Caco-2 (cell line): ENCODE measurements at regions of chr11 and their contacts with region 1.

Region 1: DNA sequence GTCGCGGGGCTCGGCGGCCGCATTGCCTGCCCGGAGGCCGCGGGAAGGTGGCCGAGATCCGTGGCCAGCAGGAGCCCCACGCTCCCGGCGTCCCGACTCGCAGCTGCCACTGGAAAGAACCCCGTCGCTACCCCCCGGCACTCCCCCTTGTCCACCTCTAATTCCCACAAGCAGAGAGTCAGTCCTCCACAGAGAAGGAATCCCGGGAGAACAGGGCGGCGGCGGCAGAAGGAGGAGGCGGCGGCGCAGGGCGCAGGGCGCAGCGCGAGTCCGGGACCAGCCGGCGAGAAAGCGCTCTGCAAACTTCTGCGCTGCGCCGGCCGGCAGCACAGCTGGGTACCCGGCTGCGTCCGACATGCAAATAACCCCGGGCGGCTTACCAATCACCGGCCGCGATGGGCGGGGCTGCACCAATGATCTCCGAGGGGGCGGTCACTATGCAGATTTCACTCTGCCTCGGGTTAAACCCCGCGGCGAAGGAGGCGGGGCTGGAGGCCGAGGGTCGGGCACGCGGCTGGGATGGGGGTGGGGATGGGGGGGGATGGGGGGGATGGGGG is at the start of gene ABTB2:
- DNase-seq: peak; percentile 98 to 99
- H3K4me3 ChIP-seq: peak within 1 kb of the TSS; percentile 53
- H3K4me3 Mint-ChIP-seq: peak within 1 kb of the TSS; percentile 75
- H3K27ac Mint-ChIP-seq: peak within 1 kb of the TSS; percentile 53
- H3K4me1 ChIP-seq: peaks cover 7% of the 10 kb centered on the region; the same call in 1 of the 2 replicates
- H3K4me1 Mint-ChIP-seq: peaks cover 6% of the 10 kb centered on the region
- H3K27me3 ChIP-seq: peaks cover 4% of the 10 kb centered on the region
- H3K27me3 Mint-ChIP-seq: peaks cover 13% of the 10 kb centered on the region
- CTCF ChIP-seq: no peak
- total RNA-seq, gene ABTB2: 2.9 and 3.6 TPM in 2 replicates

Region 2: GRCh38 chr11:33857933-33858371 is 499.8 kb before region 1 on chr11:
- CTCF ChIA-PET with region 1: no interaction called
- POLR2A ChIA-PET with region 1: no interaction called
- intact Hi-C with region 1: loop called (anchors 5 kb)
- DNase-seq: peak; percentile 60 to 77
- H3K4me3 ChIP-seq: no peak overlapping the region
- H3K4me3 Mint-ChIP-seq: no peak overlapping the region
- H3K27ac Mint-ChIP-seq: no peak overlapping the region
- H3K4me1 ChIP-seq: no peaks in the 10 kb centered on the region
- H3K4me1 Mint-ChIP-seq: no peaks in the 10 kb centered on the region
- H3K27me3 ChIP-seq: peaks cover 4% of the 10 kb centered on the region; the same call in 1 of the 2 replicates
- H3K27me3 Mint-ChIP-seq: peaks cover 39% of the 10 kb centered on the region
- CTCF ChIP-seq: peak; percentile 88 to 91

Region 3: DNA sequence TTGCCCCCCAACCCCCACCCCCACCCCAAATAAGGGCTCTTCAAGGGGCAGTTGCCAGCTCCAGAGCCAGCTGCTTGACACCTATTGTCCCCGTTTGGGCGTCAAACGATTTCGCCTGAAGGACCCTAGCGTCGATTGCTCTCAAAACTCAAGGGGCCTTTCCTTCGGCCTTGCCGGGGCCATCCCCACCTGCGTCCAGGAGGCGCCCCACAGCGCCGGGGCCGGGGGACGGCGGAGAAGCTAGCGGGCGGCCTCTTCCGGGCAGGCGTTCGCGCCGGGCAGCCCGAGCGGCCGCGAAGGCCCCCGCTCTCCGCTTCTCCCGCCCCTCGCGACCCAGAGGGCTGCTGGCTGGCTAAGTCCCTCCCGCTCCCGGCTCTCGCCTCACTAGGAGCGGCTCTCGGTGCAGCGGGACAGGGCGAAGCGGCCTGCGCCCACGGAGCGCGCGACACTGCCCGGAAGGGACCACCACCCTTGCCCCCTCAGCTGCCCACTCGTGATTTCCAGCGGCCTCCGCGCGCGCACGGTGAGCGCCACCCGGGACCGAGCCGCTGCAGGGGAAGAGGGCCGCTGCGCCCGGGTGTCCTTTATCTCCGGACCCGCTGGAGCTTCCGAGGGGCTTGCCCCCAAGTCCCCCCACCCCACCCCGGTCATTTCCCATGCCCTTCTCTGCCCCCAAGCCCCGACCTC is 306.3 kb before region 1 on chr11 and contains the start of gene CAPRIN1:
- CTCF ChIA-PET with region 1: no interaction called
- POLR2A ChIA-PET with region 1: interaction called, 4 read pairs
- intact Hi-C with region 1: loop called (anchors 5 kb)
- DNase-seq: peak; percentile 97 to 98
- H3K4me3 ChIP-seq: peak within 1 kb of the TSS; percentile 94
- H3K4me3 Mint-ChIP-seq: peak within 1 kb of the TSS; percentile 98
- H3K27ac Mint-ChIP-seq: peak within 1 kb of the TSS; percentile 97
- H3K4me1 ChIP-seq: peaks cover 19% of the 10 kb centered on the region
- H3K4me1 Mint-ChIP-seq: peaks cover 14% of the 10 kb centered on the region
- H3K27me3 ChIP-seq: no peaks in the 10 kb centered on the region
- H3K27me3 Mint-ChIP-seq: no peaks in the 10 kb centered on the region
- CTCF ChIP-seq: peak in 1 of 2 experiments; percentile 13
- total RNA-seq, gene CAPRIN1: 217 and 224 TPM in 2 replicates

Region 4: GRCh38 chr11:34174412-34175041 is 183.3 kb before region 1 on chr11:
- CTCF ChIA-PET with region 1: interaction called, 60 read pairs
- POLR2A ChIA-PET with region 1: no interaction called
- intact Hi-C with region 1: loop called (anchors 1 kb)
- DNase-seq: peak; percentile 71 to 88
- H3K4me3 ChIP-seq: peak overlapping the region; percentile 15; the same call in 1 of the 2 replicates
- H3K4me3 Mint-ChIP-seq: peak overlapping the region; percentile 75
- H3K27ac Mint-ChIP-seq: no peak overlapping the region
- H3K4me1 ChIP-seq: 0 out of 2 replicates have a peak, but pooled peaks cover 3% of the 10 kb centered on the region
- H3K4me1 Mint-ChIP-seq: no peaks in the 10 kb centered on the region
- H3K27me3 ChIP-seq: no peaks in the 10 kb centered on the region
- H3K27me3 Mint-ChIP-seq: no peaks in the 10 kb centered on the region
- CTCF ChIP-seq: peak; percentile 91 to 98

Region 5: DNA sequence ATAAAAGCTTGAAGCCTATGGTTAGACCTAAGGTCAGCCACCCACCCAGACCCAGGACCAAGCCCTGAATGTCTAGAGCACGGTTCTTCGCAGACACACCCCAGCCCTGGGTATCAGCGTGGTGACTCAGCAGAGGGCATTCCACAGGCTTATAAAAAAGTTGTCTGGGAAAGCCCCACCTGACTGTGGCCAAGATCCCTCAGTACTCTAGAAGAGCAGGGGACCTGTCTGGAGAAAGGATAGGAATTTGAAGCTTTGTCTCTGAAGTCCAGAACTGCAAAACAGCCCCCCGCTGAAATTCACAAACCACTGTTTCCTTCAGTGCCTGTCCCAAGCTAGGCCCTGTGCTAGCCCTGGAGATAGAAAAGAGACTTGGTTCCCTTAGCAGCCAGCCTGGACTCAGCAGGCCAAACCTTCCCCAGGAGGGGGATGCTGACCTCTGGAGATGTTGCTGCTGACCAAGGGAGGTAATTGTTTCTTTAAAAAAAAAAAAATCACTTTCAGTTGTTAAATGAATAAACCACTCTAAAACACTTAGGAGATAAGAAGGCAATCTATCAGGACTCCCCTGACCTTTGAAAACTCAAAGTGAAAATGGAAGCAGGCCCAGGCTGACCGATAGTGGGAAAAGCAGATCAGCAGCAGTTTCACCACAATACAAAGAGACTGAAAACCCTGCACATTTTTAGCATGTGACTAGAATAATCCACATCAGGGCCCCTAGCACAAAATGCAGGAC is 113.9 kb before region 1 on chr11:
- CTCF ChIA-PET with region 1: no interaction called
- POLR2A ChIA-PET with region 1: no interaction called
- intact Hi-C with region 1: loop called (anchors 5 kb)
- DNase-seq: peak; percentile 72 to 89
- H3K4me3 ChIP-seq: no peak overlapping the region
- H3K4me3 Mint-ChIP-seq: no peak overlapping the region
- H3K27ac Mint-ChIP-seq: peak overlapping the region; percentile 88
- H3K4me1 ChIP-seq: peaks cover 54% of the 10 kb centered on the region
- H3K4me1 Mint-ChIP-seq: peaks cover 9% of the 10 kb centered on the region
- H3K27me3 ChIP-seq: no peaks in the 10 kb centered on the region
- H3K27me3 Mint-ChIP-seq: no peaks in the 10 kb centered on the region
- CTCF ChIP-seq: no peak

Region 6: GRCh38 chr11:34335331-34335730 is 22.4 kb before region 1 on chr11:
- CTCF ChIA-PET with region 1: no interaction called
- POLR2A ChIA-PET with region 1: no interaction called
- intact Hi-C with region 1: no loop called
- DNase-seq: no peak
- H3K4me3 ChIP-seq: no peak overlapping the region
- H3K4me3 Mint-ChIP-seq: no peak overlapping the region
- H3K27ac Mint-ChIP-seq: no peak overlapping the region
- H3K4me1 ChIP-seq: peaks cover 27% of the 10 kb centered on the region
- H3K4me1 Mint-ChIP-seq: peaks cover 18% of the 10 kb centered on the region
- H3K27me3 ChIP-seq: no peaks in the 10 kb centered on the region
- H3K27me3 Mint-ChIP-seq: no peaks in the 10 kb centered on the region
- CTCF ChIP-seq: no peak

Region 7: GRCh38 chr11:34468209-34468841 is 110.5 kb after region 1 on chr11:
- CTCF ChIA-PET with region 1: no interaction called
- POLR2A ChIA-PET with region 1: no interaction called
- intact Hi-C with region 1: loop called (anchors 2 kb)
- DNase-seq: peak; percentile 53 to 54
- H3K4me3 ChIP-seq: no peak overlapping the region
- H3K4me3 Mint-ChIP-seq: no peak overlapping the region
- H3K27ac Mint-ChIP-seq: no peak overlapping the region
- H3K4me1 ChIP-seq: no peaks in the 10 kb centered on the region
- H3K4me1 Mint-ChIP-seq: no peaks in the 10 kb centered on the region
- H3K27me3 ChIP-seq: no peaks in the 10 kb centered on the region
- H3K27me3 Mint-ChIP-seq: no peaks in the 10 kb centered on the region
- CTCF ChIP-seq: peak; percentile 80 to 89

Region 8: GRCh38 chr11:34609850-34610249 is 252.1 kb after region 1 on chr11:
- CTCF ChIA-PET with region 1: no interaction called
- POLR2A ChIA-PET with region 1: no interaction called
- intact Hi-C with region 1: no loop called
- DNase-seq: no peak
- H3K4me3 ChIP-seq: no peak overlapping the region
- H3K4me3 Mint-ChIP-seq: no peak overlapping the region
- H3K27ac Mint-ChIP-seq: no peak overlapping the region
- H3K4me1 ChIP-seq: peaks cover 8% of the 10 kb centered on the region
- H3K4me1 Mint-ChIP-seq: peaks cover 11% of the 10 kb centered on the region
- H3K27me3 ChIP-seq: no peaks in the 10 kb centered on the region
- H3K27me3 Mint-ChIP-seq: no peaks in the 10 kb centered on the region
- CTCF ChIP-seq: no peak